ENCODE measurements at regions of chr13 and their contacts with region 1.

Region 1: DNA sequence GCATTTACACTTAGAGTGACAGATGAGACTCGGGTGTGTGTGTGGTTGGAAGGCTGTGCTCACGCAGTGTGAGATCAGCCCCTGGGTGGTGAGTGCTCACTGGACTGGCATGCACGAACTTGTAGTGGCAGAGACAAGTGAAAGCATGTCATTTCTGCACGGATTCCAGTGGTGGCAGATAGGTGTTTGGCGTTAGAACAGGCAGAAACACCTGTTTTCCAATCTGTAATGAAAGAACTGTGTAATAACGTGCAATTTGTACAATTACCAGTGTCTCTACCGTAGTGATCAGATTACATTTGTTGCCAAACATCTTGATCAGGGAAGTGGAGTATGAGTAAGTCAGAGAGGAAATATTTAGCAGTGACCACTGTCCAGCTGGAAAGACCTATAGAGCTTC is 8.2 kb downstream of the LAMP1 start:
- DNase-seq: no peak
- H3K4me3 ChIP-seq: no peak overlapping the region
- H3K27ac ChIP-seq: no peak overlapping the region
- H3K4me1 ChIP-seq: peaks cover 0 to 5% of the 10 kb centered on the region in 2 donors
- H3K27me3 ChIP-seq: no peaks in the 10 kb centered on the region
- CTCF ChIP-seq: no peak
- POLR2A ChIP-seq: no peak

Region 2: GRCh38 chr13:113208424-113209335 is 96.5 kb before region 1 on chr13 and contains the start of gene PCID2:
- intact Hi-C with region 1: loop called (anchors 10 kb)
- DNase-seq: peak; percentile 84 to 87
- H3K4me3 ChIP-seq: peak within 1 kb of the TSS; percentile 89 to 97 (median 94)
- H3K27ac ChIP-seq: peak within 1 kb of the TSS; percentile 90 to 99 (median 98)
- H3K4me1 ChIP-seq: peaks cover 24 to 31% of the 10 kb centered on the region in 2 donors
- H3K27me3 ChIP-seq: no peaks in the 10 kb centered on the region
- CTCF ChIP-seq: no peak
- POLR2A ChIP-seq: peak in 1 of 2 donors; percentile 85
- total RNA-seq, gene PCID2: 50.5 to 75.6 (median 56.5) TPM